Aorta (tissue), 5 donors: ENCODE measurements at regions of chr13 and their contacts with region 1.

Region 1: GRCh38 chr13:32019612-32020233 is 11.9 kb upstream of the FRY start:
- DNase-seq: no peak
- ATAC-seq: peak; percentile 57
- H3K4me3 ChIP-seq: no peak overlapping the region
- H3K27ac ChIP-seq: no peak overlapping the region
- H3K4me1 ChIP-seq: peaks cover 0 to 2% of the 10 kb centered on the region in 2 donors
- H3K27me3 ChIP-seq: no peaks in the 10 kb centered on the region

Region 2: DNA sequence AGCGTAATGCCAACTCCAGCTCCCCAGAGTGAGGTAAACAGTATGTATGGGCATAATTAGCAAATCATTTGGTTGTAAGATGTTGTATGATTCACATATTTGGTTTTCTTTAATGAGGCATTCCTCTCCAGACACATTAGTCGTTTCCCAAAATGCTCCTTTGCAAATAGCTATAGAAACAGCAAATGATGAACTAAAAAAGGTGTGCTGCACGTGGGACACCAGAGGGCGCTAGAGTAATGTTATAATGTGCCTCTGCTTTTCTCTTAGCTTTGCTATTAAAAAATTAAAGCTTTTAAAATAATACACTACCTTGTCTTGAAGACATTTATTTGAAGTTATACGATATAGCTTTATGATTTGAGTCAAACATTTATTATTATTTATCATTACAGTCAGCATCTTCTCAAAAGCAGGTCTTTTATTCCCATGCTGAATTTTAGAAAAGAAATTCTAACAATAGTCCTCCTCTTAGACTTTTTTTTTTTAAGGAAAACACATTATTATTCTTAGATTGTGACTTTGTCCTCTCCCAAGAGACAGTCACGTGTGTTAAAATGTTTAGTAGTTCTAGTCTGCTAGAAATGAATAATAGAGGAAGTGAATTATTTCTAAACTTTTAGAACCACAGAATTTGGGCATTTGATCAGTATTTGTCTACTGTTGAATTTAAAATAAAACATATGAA is 109.7 kb before region 1 on chr13:
- intact Hi-C with region 1: loop called (anchors 5 kb)
- DNase-seq: no peak
- ATAC-seq: peak; percentile 58
- H3K4me3 ChIP-seq: no peak overlapping the region
- H3K27ac ChIP-seq: no peak overlapping the region
- H3K4me1 ChIP-seq: no peaks in the 10 kb centered on the region
- H3K27me3 ChIP-seq: no peaks in the 10 kb centered on the region

Region 3: DNA sequence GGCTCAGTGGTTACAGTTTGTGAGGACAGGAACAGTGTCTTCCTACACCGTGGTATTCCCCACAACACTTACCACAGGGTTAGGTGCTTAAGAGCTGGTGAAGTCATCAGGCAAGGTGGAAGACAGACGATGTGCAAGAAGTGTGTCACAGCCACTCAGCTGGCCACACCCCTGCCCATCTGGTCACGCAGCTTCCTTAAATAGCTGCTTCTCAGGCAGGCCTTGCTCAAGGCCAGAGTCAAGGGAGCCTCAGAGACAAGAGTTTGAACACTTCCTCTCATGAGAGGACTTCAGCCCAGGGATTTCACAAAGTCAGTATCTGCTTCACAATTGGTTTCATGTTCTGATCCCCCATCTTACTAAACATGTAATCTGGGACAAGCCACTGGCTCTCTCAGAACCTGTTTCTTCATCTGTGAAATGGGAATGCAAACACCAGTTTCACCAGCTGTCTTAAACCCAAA is 68.5 kb before region 1 on chr13:
- intact Hi-C with region 1: no loop called
- DNase-seq: peak in 1 of 2 donors; percentile 88
- ATAC-seq: no peak
- H3K4me3 ChIP-seq: no peak overlapping the region
- H3K27ac ChIP-seq: no peak overlapping the region
- H3K4me1 ChIP-seq: no peaks in the 10 kb centered on the region
- H3K27me3 ChIP-seq: no peaks in the 10 kb centered on the region

Region 4: DNA sequence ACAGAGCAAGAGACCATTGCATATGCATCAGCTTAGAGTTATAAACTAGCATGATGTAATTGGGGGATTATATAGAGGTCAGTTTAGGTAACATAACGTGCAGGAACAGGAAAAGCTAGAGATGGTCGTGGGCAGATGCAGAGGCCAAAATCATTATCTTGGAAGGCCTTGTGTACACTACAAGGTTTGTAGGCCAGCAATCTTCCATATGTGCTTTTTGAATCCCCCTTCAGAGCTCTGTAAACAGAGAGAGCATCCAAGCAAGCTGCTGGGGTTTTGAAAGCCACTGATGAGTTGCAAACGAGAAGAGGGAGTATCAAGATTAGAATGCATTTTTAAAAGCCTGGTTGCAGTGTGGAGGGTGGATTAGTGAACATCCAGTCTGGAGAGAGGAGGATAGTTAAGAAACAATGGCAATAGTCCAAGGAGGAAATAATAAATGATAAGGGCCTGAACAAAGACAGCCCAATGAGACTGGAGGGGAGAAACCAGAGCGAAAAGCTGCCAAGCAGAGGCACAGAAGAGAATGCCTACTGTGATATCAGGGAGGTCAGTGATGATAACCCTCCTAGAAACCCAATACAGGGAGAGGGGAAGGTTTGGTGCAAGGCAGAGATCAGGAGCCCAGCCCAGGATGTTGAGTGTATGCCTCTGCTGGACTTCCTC is 185.8 kb after region 1 on chr13:
- intact Hi-C with region 1: loop called in 1 of 2 experiments (anchors 10 kb)
- DNase-seq: no peak
- ATAC-seq: no peak
- H3K4me3 ChIP-seq: no peak overlapping the region
- H3K27ac ChIP-seq: no peak overlapping the region
- H3K4me1 ChIP-seq: peaks cover 0 to 2% of the 10 kb centered on the region in 2 donors
- H3K27me3 ChIP-seq: no peaks in the 10 kb centered on the region

Region 5: DNA sequence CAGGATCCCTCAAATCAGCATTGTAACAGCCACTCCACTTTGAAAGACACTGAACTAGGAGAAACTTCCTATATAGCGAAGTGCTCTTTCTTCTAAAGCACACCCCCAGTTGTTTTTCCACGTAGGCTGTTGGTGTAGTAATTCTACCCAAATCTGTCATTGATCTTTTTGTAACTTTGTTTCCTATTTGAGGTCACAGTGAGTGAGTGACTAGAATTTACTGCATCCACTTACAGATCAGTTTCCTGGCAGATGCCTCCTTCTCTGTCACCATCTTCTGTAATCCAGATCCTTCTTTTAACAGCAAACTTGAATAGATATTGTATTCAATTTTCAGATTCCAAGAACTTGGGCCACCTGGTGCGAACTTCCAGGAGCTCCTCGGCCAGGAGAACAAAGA is 280.2 kb after region 1 on chr13:
- intact Hi-C with region 1: loop called in 1 of 2 experiments (anchors 5 kb)
- DNase-seq: no peak
- ATAC-seq: no peak
- H3K4me3 ChIP-seq: no peak overlapping the region
- H3K27ac ChIP-seq: no peak overlapping the region
- H3K4me1 ChIP-seq: no peaks in the 10 kb centered on the region
- H3K27me3 ChIP-seq: no peaks in the 10 kb centered on the region

Region 6: DNA sequence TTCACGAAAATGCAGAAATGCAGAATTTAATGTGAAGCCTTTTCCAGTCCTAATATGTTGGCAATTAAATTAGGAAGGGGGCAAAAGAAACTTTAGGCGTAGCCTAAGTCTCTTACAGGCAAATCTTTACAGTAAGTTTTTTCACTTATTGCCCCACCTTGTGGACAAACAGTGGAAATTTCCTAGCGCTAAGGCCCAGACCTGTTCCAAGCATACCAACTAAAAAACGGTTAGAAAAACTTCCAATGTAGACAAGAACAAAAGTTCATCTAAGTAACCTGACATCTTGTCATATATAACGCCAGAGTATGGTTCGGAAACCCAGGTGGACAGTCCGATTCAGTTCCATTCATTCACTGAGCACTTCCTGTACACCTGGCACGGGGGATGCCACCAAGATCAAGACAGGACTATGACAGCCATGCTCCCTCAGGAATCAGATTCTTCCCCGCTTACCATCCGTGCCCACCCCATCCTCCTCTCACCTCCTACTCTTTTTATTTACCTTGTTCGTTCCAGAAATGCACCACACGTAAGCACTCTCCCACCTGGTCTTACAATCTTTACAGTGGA is 290.5 kb after region 1 on chr13:
- intact Hi-C with region 1: loop called in 1 of 2 experiments (anchors 5 kb)
- DNase-seq: no peak
- ATAC-seq: peak; percentile 85
- H3K4me3 ChIP-seq: peak overlapping the region in 1 of 2 donors; percentile 38
- H3K27ac ChIP-seq: no peak overlapping the region
- H3K4me1 ChIP-seq: no peaks in the 10 kb centered on the region
- H3K27me3 ChIP-seq: no peaks in the 10 kb centered on the region